Activated naive CD4-positive, alpha-beta T cell treated with anti-CD3 and anti-CD28 coated beads, Interleukin-2, amount 10 ng/mL, durations not matched to agents 7 days and 5 days (primary cell): ENCODE measurements at regions of chr11 and their contacts with region 1.

Region 1: GRCh38 chr11:13343931-13344717 is 66.5 kb downstream of the BMAL1 start:
- DNase-seq: peak; percentile 85
- H3K4me3 Mint-ChIP-seq: no peak overlapping the region
- H3K27ac Mint-ChIP-seq: no peak overlapping the region
- H3K4me1 Mint-ChIP-seq: peaks cover 42% of the 10 kb centered on the region
- H3K27me3 Mint-ChIP-seq: no peaks in the 10 kb centered on the region

Region 2: DNA sequence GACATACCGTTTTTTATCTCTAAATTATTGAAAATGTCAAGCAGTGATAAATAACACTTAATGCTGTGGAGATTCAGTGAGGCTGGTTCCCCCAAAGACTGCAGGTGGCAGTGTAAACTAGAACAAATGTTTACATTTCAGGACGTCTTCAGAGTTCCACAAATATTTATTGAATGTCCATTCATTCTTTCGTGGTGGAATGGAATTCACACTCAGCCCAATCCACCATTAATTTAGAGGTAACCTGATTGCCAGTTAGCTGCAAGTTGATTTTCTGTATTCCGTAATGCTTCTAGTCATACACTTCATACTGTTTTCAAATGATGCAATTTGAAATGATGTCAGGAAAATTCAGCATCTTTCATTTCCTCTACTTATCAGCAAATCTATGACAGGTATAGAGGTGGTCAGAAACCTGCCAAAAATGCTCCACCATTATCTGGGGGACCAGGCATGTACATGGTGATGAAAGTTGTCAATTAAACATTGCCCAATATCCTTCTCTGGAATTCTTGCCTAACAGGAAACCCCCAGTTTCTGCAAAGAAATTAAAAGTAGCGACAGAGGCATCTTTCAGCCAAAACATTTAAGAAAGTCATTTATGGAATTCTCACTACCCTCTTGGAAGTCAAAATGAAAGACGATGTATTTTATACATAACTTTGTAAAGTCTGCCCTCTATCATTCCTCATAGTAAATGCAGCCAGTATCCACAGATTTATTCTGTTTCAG is 160.9 kb before region 1 on chr11:
- CTCF ChIA-PET with region 1: interaction called, 21 read pairs
- DNase-seq: no peak
- H3K4me3 Mint-ChIP-seq: no peak overlapping the region
- H3K27ac Mint-ChIP-seq: no peak overlapping the region
- H3K4me1 Mint-ChIP-seq: peaks cover 7% of the 10 kb centered on the region
- H3K27me3 Mint-ChIP-seq: peaks cover 26% of the 10 kb centered on the region

Region 3: GRCh38 chr11:13210424-13210823 is 133.7 kb before region 1 on chr11:
- CTCF ChIA-PET with region 1: interaction called, 59 read pairs
- DNase-seq: peak; percentile 54
- H3K4me3 Mint-ChIP-seq: no peak overlapping the region
- H3K27ac Mint-ChIP-seq: no peak overlapping the region
- H3K4me1 Mint-ChIP-seq: peaks cover 33% of the 10 kb centered on the region
- H3K27me3 Mint-ChIP-seq: no peaks in the 10 kb centered on the region

Region 4: GRCh38 chr11:13238879-13239514 is 105.1 kb before region 1 on chr11:
- CTCF ChIA-PET with region 1: interaction called, 10 read pairs
- DNase-seq: peak; percentile 62
- H3K4me3 Mint-ChIP-seq: no peak overlapping the region
- H3K27ac Mint-ChIP-seq: no peak overlapping the region
- H3K4me1 Mint-ChIP-seq: no peaks in the 10 kb centered on the region
- H3K27me3 Mint-ChIP-seq: peaks cover 23% of the 10 kb centered on the region

Region 5: DNA sequence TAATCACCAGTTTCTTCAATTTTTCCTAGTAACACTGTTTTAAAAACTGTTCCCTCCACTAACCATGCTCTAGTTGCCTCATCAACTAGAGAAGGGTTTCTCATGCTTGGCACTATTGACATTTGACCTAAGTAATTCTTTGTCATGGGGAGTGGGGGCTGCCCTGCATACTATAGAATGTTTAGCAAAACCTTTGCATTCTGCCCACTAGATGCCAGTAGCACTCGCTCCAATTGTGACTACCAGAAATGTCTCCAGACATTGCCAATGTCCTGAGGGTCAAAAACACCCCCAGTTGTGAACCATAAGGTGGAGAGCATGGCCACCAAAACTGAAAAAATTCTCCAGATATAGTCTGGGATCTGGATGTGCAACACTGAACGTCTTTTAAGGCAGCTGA is 94.1 kb before region 1 on chr11:
- CTCF ChIA-PET with region 1: interaction called, 11 read pairs
- DNase-seq: no peak
- H3K4me3 Mint-ChIP-seq: no peak overlapping the region
- H3K27ac Mint-ChIP-seq: no peak overlapping the region
- H3K4me1 Mint-ChIP-seq: no peaks in the 10 kb centered on the region
- H3K27me3 Mint-ChIP-seq: peaks cover 21% of the 10 kb centered on the region

Region 6: DNA sequence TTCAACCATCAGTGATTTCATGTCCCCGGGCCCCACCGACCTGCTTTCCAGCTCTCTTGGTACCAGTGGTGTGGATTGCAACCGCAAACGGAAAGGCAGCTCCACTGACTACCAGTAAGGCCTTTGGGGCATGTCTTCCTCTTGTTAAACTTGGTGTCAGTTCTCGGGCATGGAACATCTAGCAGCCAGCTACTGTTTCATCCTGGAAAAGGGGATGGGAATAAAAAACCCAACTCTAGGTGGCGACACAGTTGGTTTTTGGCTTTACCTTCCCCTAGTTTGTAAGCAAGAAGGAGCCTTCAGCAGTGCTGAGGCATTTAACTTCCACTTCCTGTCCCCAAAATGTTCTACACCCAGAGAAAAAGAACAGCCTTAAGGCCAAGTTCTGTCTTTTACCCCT is 10.2 kb after region 1 on chr11:
- CTCF ChIA-PET with region 1: interaction called, 10 read pairs
- DNase-seq: no peak
- H3K4me3 Mint-ChIP-seq: no peak overlapping the region
- H3K27ac Mint-ChIP-seq: no peak overlapping the region
- H3K4me1 Mint-ChIP-seq: peaks cover 6% of the 10 kb centered on the region
- H3K27me3 Mint-ChIP-seq: no peaks in the 10 kb centered on the region